ENCODE measurements at regions of chrX and their contacts with region 1.

Region 1: GRCh38 chrX:154013614-154014360 is 5.9 kb downstream of the IRAK1 start:
- DNase-seq: no peak
- ATAC-seq: peak; percentile 65
- H3K4me3 ChIP-seq: no peak overlapping the region
- H3K27ac ChIP-seq: no peak overlapping the region
- H3K4me1 ChIP-seq: no peaks in the 10 kb centered on the region
- H3K27me3 ChIP-seq: no peaks in the 10 kb centered on the region

Region 2: DNA sequence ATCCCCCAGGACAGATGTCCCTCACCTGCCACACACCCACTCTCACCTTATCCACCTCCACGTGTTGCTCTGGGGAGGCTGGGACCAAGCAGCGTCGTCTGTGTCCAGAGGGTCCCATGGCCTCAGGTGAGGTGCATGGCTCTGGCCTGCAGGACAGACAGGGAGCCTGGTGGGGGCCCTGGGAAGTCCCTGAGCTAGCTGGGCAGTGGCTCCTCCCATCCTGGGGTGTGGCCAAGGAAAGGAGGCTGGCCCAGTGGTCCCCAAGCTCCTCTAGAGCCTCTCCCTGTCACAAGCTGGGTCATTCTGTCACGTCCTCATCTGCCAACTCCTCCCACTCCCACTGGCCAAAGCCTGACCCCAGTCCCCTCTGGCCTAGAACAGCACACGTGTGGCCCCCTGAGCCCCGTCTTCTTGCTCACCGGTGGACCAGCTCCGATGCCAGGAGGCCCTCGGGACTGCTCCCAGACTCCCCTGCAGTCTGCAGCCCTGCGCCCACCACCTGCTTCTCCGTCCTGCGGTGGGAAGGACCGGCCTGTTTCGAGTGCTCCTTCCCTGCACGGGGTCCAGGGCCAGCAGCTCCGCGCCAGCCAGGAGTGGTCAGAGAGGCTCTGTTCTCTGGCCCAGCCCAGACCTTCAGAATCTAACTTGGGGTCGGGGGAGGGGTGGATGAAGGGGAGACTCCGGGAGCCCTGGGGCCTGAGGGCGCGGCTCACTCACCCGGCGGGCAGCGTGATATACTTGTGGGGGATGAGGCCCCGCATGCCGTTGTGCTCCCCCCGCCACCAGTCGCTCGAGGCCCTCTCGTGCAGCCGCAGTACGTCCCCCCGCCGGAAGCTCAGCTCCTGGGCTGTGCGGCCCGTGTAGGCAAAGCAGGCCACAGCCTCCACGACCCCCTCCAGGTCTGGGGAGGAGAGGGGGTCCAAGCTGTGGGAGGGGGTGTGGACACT is 104.5 kb before region 1 on chrX:
- intact Hi-C with region 1: no loop called
- DNase-seq: peak in 1 of 2 donors; percentile 38
- ATAC-seq: no peak
- H3K4me3 ChIP-seq: no peak overlapping the region
- H3K27ac ChIP-seq: no peak overlapping the region
- H3K4me1 ChIP-seq: no peaks in the 10 kb centered on the region
- H3K27me3 ChIP-seq: no peaks in the 10 kb centered on the region

Region 3: GRCh38 chrX:154046031-154046781 is 32.4 kb after region 1 on chrX:
- intact Hi-C with region 1: loop called (anchors 5 kb)
- DNase-seq: no peak
- ATAC-seq: peak; percentile 63
- H3K4me3 ChIP-seq: no peak overlapping the region
- H3K27ac ChIP-seq: no peak overlapping the region
- H3K4me1 ChIP-seq: peaks cover 0 to 6% of the 10 kb centered on the region in 2 donors
- H3K27me3 ChIP-seq: no peaks in the 10 kb centered on the region